Right ventricle myocardium superior (tissue), 1 donor: ENCODE measurements at regions of chr9 and their contacts with region 1.

Region 1: DNA sequence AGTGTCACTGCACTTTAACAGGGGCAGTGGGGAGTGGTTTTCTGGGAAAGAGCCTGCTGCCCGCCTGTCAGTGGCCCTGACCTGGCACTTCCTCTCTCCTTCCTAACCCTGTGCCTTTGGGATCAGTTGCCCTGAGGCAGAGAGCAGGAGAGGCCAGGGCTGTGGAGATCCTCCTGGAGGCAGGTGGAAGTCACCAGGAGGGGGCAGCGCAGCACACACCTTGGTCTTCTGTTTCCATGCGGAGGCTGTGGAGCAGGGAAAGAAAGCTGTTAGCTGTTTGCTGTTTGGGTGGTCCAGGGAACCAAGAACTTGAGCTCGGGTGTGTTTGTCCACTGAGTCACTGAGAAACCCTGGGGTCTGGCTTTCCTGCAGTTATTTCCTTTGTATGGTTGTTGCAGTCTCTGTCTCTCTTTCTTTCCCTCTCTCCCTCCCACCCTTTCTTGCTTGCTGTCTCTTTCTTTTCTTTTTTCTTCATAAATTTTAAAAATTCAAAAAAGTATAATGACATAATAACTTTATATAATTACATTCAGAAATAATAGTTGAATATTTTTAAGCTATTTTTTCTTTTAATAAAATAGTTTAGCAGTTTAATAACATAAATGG is 28.1 kb downstream of the NTRK2 start:
- DNase-seq: peak; percentile 80
- ATAC-seq: peak; percentile 95

Region 2: GRCh38 chr9:84953797-84954705 is 256.4 kb after region 1 on chr9:
- intact Hi-C with region 1: loop called (anchors 2 kb)
- DNase-seq: peak; percentile 86
- ATAC-seq: peak; percentile 97

Region 3: DNA sequence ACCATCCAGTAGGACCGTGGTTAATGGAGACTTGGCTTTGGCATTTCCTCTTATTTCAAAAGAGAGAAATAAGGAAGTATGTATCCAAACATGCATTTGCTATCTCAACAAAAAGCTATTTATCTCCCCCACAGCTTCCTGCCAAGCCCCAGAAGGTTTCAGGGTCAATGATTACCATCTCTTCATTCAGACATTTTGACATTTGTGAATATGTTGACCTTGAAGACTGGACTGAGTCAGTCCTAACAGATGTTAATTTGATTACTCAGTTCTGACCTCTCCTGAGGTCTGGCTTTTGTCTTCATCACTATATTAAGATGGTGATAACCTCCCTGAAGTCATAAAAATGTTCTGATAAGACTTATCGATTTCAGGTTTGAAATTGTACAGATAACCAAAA is 564.7 kb after region 1 on chr9:
- intact Hi-C with region 1: loop called (anchors 10 kb)
- DNase-seq: no peak
- ATAC-seq: no peak